ENCODE measurements at regions of chr15 and their contacts with region 1.

Region 1: GRCh38 chr15:32802286-32802936 is 84.6 kb downstream of the GREM1 start:
- DNase-seq: peak; percentile 96
- H3K4me3 ChIP-seq: no peak overlapping the region
- CTCF ChIP-seq: no peak

Region 2: GRCh38 chr15:32736005-32736700 is 66.3 kb before region 1 on chr15:
- in situ Hi-C with region 1: loop called (anchors 5 kb)
- DNase-seq: no peak
- H3K4me3 ChIP-seq: no peak overlapping the region
- CTCF ChIP-seq: no peak